ENCODE measurements at regions of chr18 and their contacts with region 1.

Region 1: GRCh38 chr18:45690975-45691815 is 32.8 kb upstream of the SLC14A1 start:
- DNase-seq: peak; percentile 58 to 88 (median 82)
- ATAC-seq: no peak
- H3K4me3 ChIP-seq: no peak overlapping the region
- H3K4me3 Mint-ChIP-seq: peak overlapping the region; percentile 35
- H3K27ac ChIP-seq: no peak overlapping the region
- H3K27ac Mint-ChIP-seq: no peak overlapping the region
- H3K4me1 ChIP-seq: peaks cover 49% of the 10 kb centered on the region
- H3K4me1 Mint-ChIP-seq: peaks cover 47% of the 10 kb centered on the region
- H3K27me3 ChIP-seq: no peaks in the 10 kb centered on the region
- H3K27me3 Mint-ChIP-seq: peaks cover 2% of the 10 kb centered on the region
- CTCF ChIP-seq: peak; percentile 81

Region 2: DNA sequence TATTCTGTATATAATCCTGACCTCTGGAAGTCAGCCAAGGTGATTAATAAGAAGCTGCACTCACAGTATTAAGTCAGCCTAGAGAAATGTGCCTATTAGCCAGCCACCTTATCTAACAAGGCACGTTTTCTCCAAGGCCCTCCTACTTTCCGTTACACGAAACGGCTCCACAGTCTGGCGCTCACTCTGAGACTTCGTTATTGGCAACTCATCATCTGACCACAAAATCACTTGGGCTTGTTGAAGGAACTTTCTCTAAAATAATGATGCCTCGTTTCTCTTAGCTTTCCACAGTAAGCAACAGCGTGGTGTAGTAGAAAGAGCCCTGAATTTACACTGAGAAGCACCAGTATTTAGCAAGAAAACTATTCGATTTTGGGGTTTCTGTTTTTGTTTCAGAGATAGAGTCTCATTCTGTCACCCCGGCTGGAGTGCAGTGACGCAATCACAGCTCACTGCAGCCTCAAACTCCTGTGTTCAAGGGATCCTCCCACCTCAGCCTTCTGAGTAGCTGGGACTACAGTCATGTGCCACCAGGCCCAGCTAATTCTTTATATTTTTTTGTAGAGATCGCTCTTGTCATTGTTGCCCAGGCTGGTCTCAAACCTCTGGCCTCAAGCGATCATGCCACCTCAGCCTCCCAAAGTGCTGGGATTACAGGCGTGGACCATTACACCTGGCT is 20.8 kb before region 1 on chr18:
- CTCF ChIA-PET with region 1: interaction called, 209 read pairs
- POLR2A ChIA-PET with region 1: interaction called, 53 read pairs
- intact Hi-C with region 1: loop called (anchors 1 kb)
- DNase-seq: peak in 8 of 9 experiments; percentile 6 to 77 (median 40)
- ATAC-seq: peak; percentile 68
- H3K4me3 ChIP-seq: no peak overlapping the region
- H3K4me3 Mint-ChIP-seq: peak overlapping the region; percentile 46
- H3K27ac ChIP-seq: peak overlapping the region; percentile 33 to 54
- H3K27ac Mint-ChIP-seq: peak overlapping the region; percentile 79
- H3K4me1 ChIP-seq: peaks cover 53% of the 10 kb centered on the region
- H3K4me1 Mint-ChIP-seq: peaks cover 53% of the 10 kb centered on the region
- H3K27me3 ChIP-seq: no peaks in the 10 kb centered on the region
- H3K27me3 Mint-ChIP-seq: no peaks in the 10 kb centered on the region
- CTCF ChIP-seq: no peak

Region 3: GRCh38 chr18:45910405-45911023 is 219.3 kb after region 1 on chr18:
- CTCF ChIA-PET with region 1: interaction called, 7 read pairs
- POLR2A ChIA-PET with region 1: no interaction called
- intact Hi-C with region 1: loop called in 1 of 2 experiments (anchors 1 kb)
- DNase-seq: peak; percentile 35 to 73 (median 63)
- ATAC-seq: peak; percentile 84
- H3K4me3 ChIP-seq: no peak overlapping the region
- H3K4me3 Mint-ChIP-seq: no peak overlapping the region
- H3K27ac ChIP-seq: no peak overlapping the region
- H3K27ac Mint-ChIP-seq: no peak overlapping the region
- H3K4me1 ChIP-seq: no peaks in the 10 kb centered on the region
- H3K4me1 Mint-ChIP-seq: no peaks in the 10 kb centered on the region
- H3K27me3 ChIP-seq: no peaks in the 10 kb centered on the region
- H3K27me3 Mint-ChIP-seq: no peaks in the 10 kb centered on the region
- CTCF ChIP-seq: peak; percentile 71

Region 4: GRCh38 chr18:45974088-45974536 is 282.9 kb after region 1 on chr18:
- CTCF ChIA-PET with region 1: interaction called, 7 read pairs
- POLR2A ChIA-PET with region 1: no interaction called
- intact Hi-C with region 1: loop called in 1 of 2 experiments (anchors 2 kb)
- DNase-seq: peak; percentile 39 to 81 (median 63)
- ATAC-seq: peak; percentile 83
- H3K4me3 ChIP-seq: no peak overlapping the region
- H3K4me3 Mint-ChIP-seq: no peak overlapping the region
- H3K27ac ChIP-seq: no peak overlapping the region
- H3K27ac Mint-ChIP-seq: no peak overlapping the region
- H3K4me1 ChIP-seq: peaks cover 7% of the 10 kb centered on the region
- H3K4me1 Mint-ChIP-seq: peaks cover 6% of the 10 kb centered on the region
- H3K27me3 ChIP-seq: no peaks in the 10 kb centered on the region
- H3K27me3 Mint-ChIP-seq: no peaks in the 10 kb centered on the region
- CTCF ChIP-seq: peak; percentile 86

Region 5: GRCh38 chr18:46013484-46014189 is 322.4 kb after region 1 on chr18:
- CTCF ChIA-PET with region 1: no interaction called
- POLR2A ChIA-PET with region 1: no interaction called
- intact Hi-C with region 1: no loop called
- DNase-seq: peak in 1 of 9 experiments; percentile 13
- ATAC-seq: no peak
- H3K4me3 ChIP-seq: no peak overlapping the region
- H3K4me3 Mint-ChIP-seq: no peak overlapping the region
- H3K27ac ChIP-seq: no peak overlapping the region
- H3K27ac Mint-ChIP-seq: no peak overlapping the region
- H3K4me1 ChIP-seq: no peaks in the 10 kb centered on the region
- H3K4me1 Mint-ChIP-seq: no peaks in the 10 kb centered on the region
- H3K27me3 ChIP-seq: no peaks in the 10 kb centered on the region
- H3K27me3 Mint-ChIP-seq: no peaks in the 10 kb centered on the region
- CTCF ChIP-seq: no peak